AG04449 (cell line): ENCODE measurements at regions of chr9 and their contacts with region 1.

Region 1: DNA sequence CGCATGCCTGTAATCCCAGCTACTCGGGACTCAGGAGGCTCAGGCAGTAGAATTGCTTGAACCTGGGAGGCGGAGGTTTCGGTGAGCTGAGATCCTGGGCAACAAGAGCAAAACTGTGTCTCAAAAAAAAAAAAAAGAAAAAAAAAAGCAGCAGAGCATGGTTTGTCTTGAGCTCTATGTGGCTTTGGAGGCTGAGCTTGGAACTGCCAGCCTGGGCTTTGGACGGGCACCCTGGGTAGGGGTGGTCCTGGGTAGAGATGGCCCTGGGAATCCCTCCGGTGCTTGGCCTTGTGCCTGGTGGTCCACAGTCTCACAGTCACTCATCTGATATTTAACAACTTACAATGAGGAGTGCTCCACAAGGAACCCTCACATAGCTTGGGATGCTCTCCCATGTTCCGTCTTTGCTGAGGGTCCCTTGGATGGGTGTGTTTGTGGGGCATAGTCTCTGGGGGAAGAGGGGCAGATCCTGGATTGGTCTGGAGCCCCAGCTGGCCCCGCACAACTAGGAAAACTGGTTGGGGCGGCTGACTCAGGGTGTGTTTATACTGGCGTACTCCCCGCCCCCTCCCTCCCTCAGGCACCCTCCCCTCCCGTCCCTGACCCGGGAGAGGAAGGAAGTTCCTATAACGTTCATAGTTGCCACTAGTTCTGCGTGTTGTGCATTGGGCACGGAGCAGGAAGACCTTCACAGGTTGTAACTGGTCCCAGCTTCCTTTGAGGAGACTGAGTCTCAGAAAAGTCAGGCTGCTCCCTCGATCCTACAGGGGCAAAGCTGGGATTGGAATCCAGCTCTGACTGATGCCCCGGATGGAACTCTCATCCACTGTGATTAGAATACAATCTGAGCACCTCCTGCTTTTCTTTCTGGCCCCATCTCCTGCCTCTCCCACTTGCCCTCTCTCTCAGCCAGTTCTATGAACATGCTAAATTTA is 11.2 kb downstream of the IER5L start:
- DNase-seq: no peak
- H3K4me3 ChIP-seq: peak overlapping the region; percentile 9
- CTCF ChIP-seq: no peak

Region 2: GRCh38 chr9:129093421-129094204 is 73.3 kb before region 1 on chr9:
- CTCF ChIA-PET with region 1: no interaction called
- POLR2A ChIA-PET with region 1: no interaction called
- DNase-seq: no peak
- H3K4me3 ChIP-seq: no peak overlapping the region
- CTCF ChIP-seq: no peak

Region 3: GRCh38 chr9:129145822-129146292 is 21.0 kb before region 1 on chr9:
- CTCF ChIA-PET with region 1: interaction called, 345 read pairs
- POLR2A ChIA-PET with region 1: interaction called, 233 read pairs
- DNase-seq: peak; percentile 56
- H3K4me3 ChIP-seq: no peak overlapping the region
- CTCF ChIP-seq: no peak